ENCODE measurements at regions of chr3 and their contacts with region 1.

Region 1: GRCh38 chr3:44223299-44223698 is 18.4 kb upstream of the TOPAZ1 start:
- DNase-seq: no peak
- ATAC-seq: no peak
- H3K4me3 ChIP-seq: no peak overlapping the region
- H3K27ac ChIP-seq: no peak overlapping the region
- H3K4me1 ChIP-seq: no peaks in the 10 kb centered on the region
- H3K27me3 ChIP-seq: peaks cover 0 to 5% of the 10 kb centered on the region in 2 experiments; a peak in 1 of 4 replicates
- CTCF ChIP-seq: no peak
- EP300 ChIP-seq: no peak
- POLR2A ChIP-seq: no peak
- RAD21 ChIP-seq: no peak

Region 2: GRCh38 chr3:44235604-44236484 is 12.5 kb after region 1 on chr3:
- CTCF ChIA-PET with region 1: interaction called, 15 read pairs
- POLR2A ChIA-PET with region 1: no interaction called
- RAD21 ChIA-PET with region 1: interaction called, 3 read pairs
- SMC1A ChIA-PET with region 1: no interaction called
- in situ Hi-C with region 1: no loop called
- intact Hi-C with region 1: no loop called
- DNase-seq: peak; percentile 11
- ATAC-seq: peak; percentile 90
- H3K4me3 ChIP-seq: no peak overlapping the region
- H3K27ac ChIP-seq: no peak overlapping the region
- H3K4me1 ChIP-seq: no peaks in the 10 kb centered on the region
- H3K27me3 ChIP-seq: no peaks in the 10 kb centered on the region
- CTCF ChIP-seq: peak; percentile 67 to 83 (median 68)
- EP300 ChIP-seq: no peak
- POLR2A ChIP-seq: no peak
- RAD21 ChIP-seq: peak; percentile 50

Region 3: DNA sequence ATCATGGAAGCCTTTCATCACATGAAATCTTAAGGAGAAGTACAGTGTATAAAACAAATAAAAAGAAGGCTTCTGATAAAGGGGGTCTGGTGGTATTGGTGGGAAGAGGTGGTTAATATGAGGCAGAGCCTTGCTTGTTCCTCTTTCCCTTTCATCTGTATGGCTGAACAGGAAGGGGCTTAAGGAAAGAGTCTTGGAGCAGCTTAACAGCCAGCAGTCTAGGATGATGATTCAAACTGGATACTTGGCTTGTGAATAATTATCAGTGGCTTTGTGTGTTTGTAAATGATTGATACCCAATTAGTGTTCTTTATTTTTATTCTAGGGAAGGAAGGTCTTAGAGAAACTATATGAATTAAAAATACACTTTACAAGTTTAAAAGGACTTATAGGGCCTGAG is 86.2 kb after region 1 on chr3:
- CTCF ChIA-PET with region 1: no interaction called
- POLR2A ChIA-PET with region 1: no interaction called
- RAD21 ChIA-PET with region 1: no interaction called
- SMC1A ChIA-PET with region 1: no interaction called
- in situ Hi-C with region 1: no loop called
- intact Hi-C with region 1: no loop called
- DNase-seq: no peak
- ATAC-seq: no peak
- H3K4me3 ChIP-seq: no peak overlapping the region
- H3K27ac ChIP-seq: no peak overlapping the region
- H3K4me1 ChIP-seq: no peaks in the 10 kb centered on the region
- H3K27me3 ChIP-seq: no peaks in the 10 kb centered on the region
- CTCF ChIP-seq: no peak
- EP300 ChIP-seq: no peak
- POLR2A ChIP-seq: no peak
- RAD21 ChIP-seq: no peak